Dorsolateral prefrontal cortex (tissue), 120 donors: ENCODE measurements at regions of chr16 and their contacts with region 1.

Region 1: GRCh38 chr16:67935402-67936123 is 1.1 kb downstream of the PSMB10 start:
- DNase-seq: peak; percentile 94 to 98 (median 98)
- H3K4me3 ChIP-seq: peak overlapping the region; percentile 67 to 99 (median 92)
- H3K27ac ChIP-seq: peak overlapping the region; percentile 49 to 96 (median 88)
- H3K27me3 ChIP-seq: no peaks in the 10 kb centered on the region
- CTCF ChIP-seq: peak in 33 of 56 donors; percentile 9 to 58 (median 31)

Region 2: GRCh38 chr16:67883872-67884261 is 51.7 kb before region 1 on chr16:
- intact Hi-C with region 1: loop called in 1 of 2 experiments (anchors 2 kb)
- DNase-seq: peak in 9 of 10 donors; percentile 43 to 71 (median 53)
- H3K4me3 ChIP-seq: peak overlapping the region in 3 of 59 donors; percentile 4 to 55 (median 53)
- H3K27ac ChIP-seq: peak overlapping the region; percentile 9 to 98 (median 92)
- H3K27me3 ChIP-seq: no peaks in the 10 kb centered on the region
- CTCF ChIP-seq: peak; percentile 5 to 93 (median 82)

Region 3: GRCh38 chr16:68040507-68041288 is 105.1 kb after region 1 on chr16:
- intact Hi-C with region 1: loop called in 1 of 2 experiments (anchors 5 kb)
- DNase-seq: peak; percentile 69 to 85 (median 79)
- H3K4me3 ChIP-seq: no peak overlapping the region
- H3K27ac ChIP-seq: peak overlapping the region in 10 of 59 donors; percentile 0 to 48 (median 26)
- H3K27me3 ChIP-seq: no peaks in the 10 kb centered on the region
- CTCF ChIP-seq: peak; percentile 45 to 88 (median 78)

Region 4: GRCh38 chr16:68085259-68086071 is 149.9 kb after region 1 on chr16 and contains the start of gene NFATC3:
- intact Hi-C with region 1: loop called in 1 of 2 experiments (anchors 5 kb)
- DNase-seq: peak; percentile 95 to 99 (median 98)
- H3K4me3 ChIP-seq: peak within 1 kb of the TSS; percentile 71 to 97 (median 85)
- H3K27ac ChIP-seq: peak within 1 kb of the TSS; percentile 91 to 100 (median 99)
- H3K27me3 ChIP-seq: no peaks in the 10 kb centered on the region
- CTCF ChIP-seq: peak in 23 of 56 donors; percentile 6 to 39 (median 23)
- total RNA-seq, gene NFATC3: 30.0 to 60.4 (median 40.8) TPM

Region 5: GRCh38 chr16:68155425-68155824 is 219.9 kb after region 1 on chr16:
- intact Hi-C with region 1: no loop called
- DNase-seq: peak in 1 of 10 donors; percentile 19
- H3K4me3 ChIP-seq: no peak overlapping the region
- H3K27ac ChIP-seq: no peak overlapping the region
- H3K27me3 ChIP-seq: no peaks in the 10 kb centered on the region
- CTCF ChIP-seq: no peak